Dorsolateral prefrontal cortex (tissue), 120 donors: ENCODE measurements at regions of chr11 and their contacts with region 1.

Region 1: GRCh38 chr11:59283825-59284772 is 71.4 kb upstream of the MPEG1 start:
- DNase-seq: peak in 1 of 10 donors; percentile 47
- H3K4me3 ChIP-seq: no peak overlapping the region
- H3K27ac ChIP-seq: no peak overlapping the region
- H3K27me3 ChIP-seq: peaks cover 0 to 6% (median 0%) of the 10 kb centered on the region in 45 donors
- CTCF ChIP-seq: peak; percentile 65 to 88 (median 78)

Region 2: DNA sequence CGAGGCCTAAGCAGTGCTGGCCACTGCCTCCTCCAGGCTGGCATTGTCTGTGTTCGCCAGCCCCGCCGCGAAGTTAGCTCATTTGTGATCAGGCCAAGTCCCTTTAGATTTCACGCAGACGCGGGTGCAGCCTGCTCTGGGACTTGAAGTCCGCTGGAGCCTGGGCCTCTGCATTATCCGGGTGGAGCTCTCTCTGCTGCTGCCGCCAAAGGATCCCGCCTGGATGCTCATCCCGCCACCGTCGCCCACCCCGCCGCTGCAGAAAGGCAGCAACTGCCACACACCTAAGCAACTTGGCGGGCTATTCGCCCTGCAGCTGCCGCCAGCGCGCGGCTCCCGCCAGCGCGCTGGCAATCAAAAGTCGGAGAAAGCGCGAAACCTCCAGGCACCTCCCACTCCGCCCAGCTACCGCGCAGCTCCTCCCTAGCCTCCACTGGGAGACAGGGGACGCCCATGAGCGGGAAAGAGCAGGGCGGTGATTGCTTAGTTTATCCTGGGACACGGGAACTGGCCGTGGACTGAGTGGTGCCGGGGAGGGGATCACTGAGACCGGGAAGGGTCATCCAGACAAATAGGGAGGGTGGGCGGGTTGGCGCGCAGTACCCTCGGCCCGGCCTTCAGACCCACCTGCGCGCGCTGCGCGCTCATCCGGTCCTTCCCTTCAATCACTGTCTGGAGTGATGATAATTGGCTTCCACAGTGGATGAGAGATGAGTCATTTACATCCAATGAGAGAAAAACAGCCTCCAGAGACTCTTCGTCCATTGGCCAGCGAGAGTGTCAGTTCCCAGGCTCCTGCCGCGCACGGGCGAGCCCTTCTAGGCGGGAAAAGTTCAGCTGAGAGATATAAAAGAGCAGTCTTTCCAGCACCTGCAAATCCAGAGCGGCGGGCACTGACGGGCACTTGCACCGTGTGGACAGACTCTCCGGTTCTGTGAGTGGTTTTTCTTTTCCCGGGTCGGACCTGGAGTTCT is 177.4 kb before region 1 on chr11 and contains the start of gene FAM111B:
- intact Hi-C with region 1: no loop called
- DNase-seq: peak; percentile 36 to 89 (median 82)
- H3K4me3 ChIP-seq: peak within 1 kb of the TSS; percentile 31 to 82 (median 65)
- H3K27ac ChIP-seq: no peak within 1 kb of the TSS
- H3K27me3 ChIP-seq: peaks cover 0 to 22% (median 3%) of the 10 kb centered on the region in 45 donors
- CTCF ChIP-seq: peak in 19 of 56 donors; percentile 5 to 52 (median 18)
- total RNA-seq, gene FAM111B: 0.14 to 2.1 (median 0.49) TPM in 21 of 120 experiments, not detected in the others

Region 3: DNA sequence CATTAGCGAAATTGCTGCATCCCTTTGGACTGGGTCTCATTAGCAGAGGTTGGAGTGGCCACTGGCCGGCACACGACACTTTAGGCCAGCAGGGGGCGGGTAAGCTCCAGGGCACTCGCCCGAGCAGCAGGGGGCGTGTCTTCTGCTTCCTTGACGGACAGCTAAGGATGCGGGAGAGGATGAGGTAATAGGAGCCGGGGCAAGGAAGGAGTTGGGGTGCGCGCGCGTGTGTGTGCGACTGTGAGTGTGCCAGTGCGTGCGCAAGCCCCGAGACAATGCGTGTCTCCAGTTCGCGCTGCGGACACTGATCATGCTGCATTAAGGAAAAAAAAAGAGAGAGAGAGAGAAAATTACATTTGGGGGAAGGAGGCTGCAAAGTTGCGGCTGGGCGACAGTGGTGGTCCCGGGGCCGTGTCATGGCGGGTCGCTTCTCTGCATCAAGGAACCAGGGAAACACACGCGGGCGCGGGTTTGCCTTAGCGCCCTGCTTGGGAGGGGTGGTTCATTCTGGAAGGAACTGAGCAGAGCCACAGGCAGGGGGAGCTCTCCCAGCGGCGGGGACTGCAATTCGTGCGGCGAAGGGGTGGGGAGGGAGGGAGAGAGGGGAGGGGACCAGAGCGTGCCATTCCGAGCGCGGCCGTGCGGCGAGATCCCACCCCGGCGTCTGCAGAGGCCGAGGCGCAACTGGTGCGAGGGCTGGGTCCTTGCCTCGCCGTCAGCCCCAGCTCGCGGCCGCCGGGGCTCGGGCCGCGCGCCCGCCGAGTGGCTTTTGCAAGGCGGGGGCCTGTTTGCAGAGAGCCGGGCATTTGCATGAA is 112.4 kb before region 1 on chr11 and contains the start of gene DTX4:
- intact Hi-C with region 1: loop called in 1 of 2 experiments (anchors 1 kb)
- DNase-seq: peak; percentile 91 to 96 (median 94)
- H3K4me3 ChIP-seq: peak within 1 kb of the TSS; percentile 56 to 92 (median 77)
- H3K27ac ChIP-seq: peak within 1 kb of the TSS; percentile 76 to 99 (median 95)
- H3K27me3 ChIP-seq: no peaks in the 10 kb centered on the region
- CTCF ChIP-seq: peak in 55 of 56 donors; percentile 61 to 99 (median 91)
- total RNA-seq, gene DTX4: 21.4 to 93.9 (median 32.3) TPM

Region 4: DNA sequence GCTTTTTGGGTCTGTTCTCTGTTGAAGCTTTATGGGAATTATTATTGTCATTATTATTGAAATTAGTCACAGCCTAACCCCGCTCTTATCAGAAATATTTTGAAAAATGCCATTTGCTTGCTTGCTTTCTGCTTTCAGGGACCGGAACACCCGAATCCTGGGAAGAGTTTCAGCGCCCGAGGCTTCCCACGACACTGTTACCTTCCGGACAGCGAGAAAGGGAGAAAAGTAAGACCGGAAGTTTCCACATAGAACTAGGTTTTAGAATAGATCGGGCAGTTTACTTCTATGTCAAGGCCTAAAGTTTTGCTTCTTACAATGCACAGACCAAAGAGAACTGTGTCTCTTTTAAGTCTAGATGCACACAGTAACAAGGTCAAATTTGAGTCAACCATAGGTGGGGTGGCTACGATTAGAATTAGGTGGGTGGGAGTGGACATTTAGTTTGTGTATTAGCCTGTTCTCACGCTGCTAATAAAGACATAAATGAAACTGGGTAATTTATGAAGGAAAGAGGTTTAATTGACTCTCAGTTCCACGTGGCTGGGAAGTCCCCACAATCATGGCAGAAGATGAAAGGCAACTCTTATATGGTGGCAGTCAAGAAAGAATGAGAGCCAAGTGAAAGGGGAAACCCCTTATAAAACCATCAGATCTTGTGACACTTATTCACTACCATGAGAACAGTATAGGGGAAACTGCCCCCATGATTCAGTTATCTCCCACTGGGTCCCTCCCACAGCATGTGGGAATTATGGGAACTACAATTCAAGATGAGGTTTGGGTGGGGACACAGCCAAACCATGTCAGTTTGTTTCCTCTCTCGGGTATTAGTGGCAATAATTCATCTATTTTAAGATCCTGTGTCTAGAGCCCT is 84.3 kb before region 1 on chr11:
- intact Hi-C with region 1: loop called in 1 of 2 experiments (anchors 5 kb)
- DNase-seq: no peak
- H3K4me3 ChIP-seq: no peak overlapping the region
- H3K27ac ChIP-seq: peak overlapping the region in 2 of 59 donors; percentile 58 to 65
- H3K27me3 ChIP-seq: no peaks in the 10 kb centered on the region
- CTCF ChIP-seq: no peak